ENCODE measurements at regions of chr6 and their contacts with region 1.

Region 1: GRCh38 chr6:135438907-135439535 is 58.5 kb downstream of the AHI1 start:
- DNase-seq: peak in 1 of 2 experiments; percentile 22
- H3K4me3 ChIP-seq: no peak overlapping the region
- H3K4me3 Mint-ChIP-seq: no peak overlapping the region
- H3K27ac Mint-ChIP-seq: no peak overlapping the region
- H3K4me1 ChIP-seq: no peaks in the 10 kb centered on the region
- H3K4me1 Mint-ChIP-seq: no peaks in the 10 kb centered on the region
- H3K27me3 ChIP-seq: no peaks in the 10 kb centered on the region
- H3K27me3 Mint-ChIP-seq: no peaks in the 10 kb centered on the region
- CTCF ChIP-seq: peak; percentile 53 to 55

Region 2: GRCh38 chr6:134938896-134939295 is 500.1 kb before region 1 on chr6:
- CTCF ChIA-PET with region 1: no interaction called
- POLR2A ChIA-PET with region 1: no interaction called
- intact Hi-C with region 1: loop called (anchors 2 kb)
- DNase-seq: no peak
- H3K4me3 ChIP-seq: no peak overlapping the region
- H3K4me3 Mint-ChIP-seq: no peak overlapping the region
- H3K27ac Mint-ChIP-seq: no peak overlapping the region
- H3K4me1 ChIP-seq: peaks cover 6% of the 10 kb centered on the region; the same call in 1 of the 2 replicates
- H3K4me1 Mint-ChIP-seq: no peaks in the 10 kb centered on the region
- H3K27me3 ChIP-seq: no peaks in the 10 kb centered on the region
- H3K27me3 Mint-ChIP-seq: no peaks in the 10 kb centered on the region
- CTCF ChIP-seq: no peak

Region 3: GRCh38 chr6:135075018-135075417 is 364.0 kb before region 1 on chr6:
- CTCF ChIA-PET with region 1: no interaction called
- POLR2A ChIA-PET with region 1: no interaction called
- intact Hi-C with region 1: loop called (anchors 10 kb)
- DNase-seq: no peak
- H3K4me3 ChIP-seq: no peak overlapping the region
- H3K4me3 Mint-ChIP-seq: no peak overlapping the region
- H3K27ac Mint-ChIP-seq: no peak overlapping the region
- H3K4me1 ChIP-seq: no peaks in the 10 kb centered on the region
- H3K4me1 Mint-ChIP-seq: no peaks in the 10 kb centered on the region
- H3K27me3 ChIP-seq: no peaks in the 10 kb centered on the region
- H3K27me3 Mint-ChIP-seq: peaks cover 9% of the 10 kb centered on the region
- CTCF ChIP-seq: no peak

Region 4: GRCh38 chr6:135145063-135145800 is 293.8 kb before region 1 on chr6:
- CTCF ChIA-PET with region 1: no interaction called
- POLR2A ChIA-PET with region 1: no interaction called
- intact Hi-C with region 1: loop called (anchors 1 kb)
- DNase-seq: peak in 1 of 2 experiments; percentile 30
- H3K4me3 ChIP-seq: no peak overlapping the region
- H3K4me3 Mint-ChIP-seq: no peak overlapping the region
- H3K27ac Mint-ChIP-seq: no peak overlapping the region
- H3K4me1 ChIP-seq: no peaks in the 10 kb centered on the region
- H3K4me1 Mint-ChIP-seq: no peaks in the 10 kb centered on the region
- H3K27me3 ChIP-seq: no peaks in the 10 kb centered on the region
- H3K27me3 Mint-ChIP-seq: no peaks in the 10 kb centered on the region
- CTCF ChIP-seq: peak; percentile 48 to 57

Region 5: DNA sequence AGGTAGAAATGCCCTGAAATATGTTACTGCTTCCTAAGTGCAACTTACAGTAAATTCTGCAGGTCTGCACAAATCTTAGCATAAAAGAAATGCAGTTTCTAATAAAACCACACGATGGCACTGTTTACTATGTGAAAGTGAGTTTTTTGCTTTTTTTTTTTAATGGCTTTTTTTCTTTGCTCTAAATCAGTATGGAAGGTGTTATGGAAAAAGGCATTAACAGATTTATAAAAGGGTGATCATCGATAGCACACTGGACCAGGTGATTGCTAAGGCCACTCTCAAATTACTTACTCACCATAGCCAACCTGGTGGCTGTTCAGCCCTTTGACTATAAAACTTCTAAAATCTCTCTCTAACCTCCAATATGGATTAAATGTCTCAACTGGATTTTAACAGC is 12.7 kb after region 1 on chr6:
- CTCF ChIA-PET with region 1: no interaction called
- POLR2A ChIA-PET with region 1: no interaction called
- intact Hi-C with region 1: no loop called
- DNase-seq: peak in 1 of 2 experiments; percentile 36
- H3K4me3 ChIP-seq: no peak overlapping the region
- H3K4me3 Mint-ChIP-seq: no peak overlapping the region
- H3K27ac Mint-ChIP-seq: no peak overlapping the region
- H3K4me1 ChIP-seq: no peaks in the 10 kb centered on the region
- H3K4me1 Mint-ChIP-seq: no peaks in the 10 kb centered on the region
- H3K27me3 ChIP-seq: no peaks in the 10 kb centered on the region
- H3K27me3 Mint-ChIP-seq: no peaks in the 10 kb centered on the region
- CTCF ChIP-seq: peak; percentile 40 to 59